Breast epithelium (tissue), 4 donors: ENCODE measurements at regions of chr2 and their contacts with region 1.

Region 1: DNA sequence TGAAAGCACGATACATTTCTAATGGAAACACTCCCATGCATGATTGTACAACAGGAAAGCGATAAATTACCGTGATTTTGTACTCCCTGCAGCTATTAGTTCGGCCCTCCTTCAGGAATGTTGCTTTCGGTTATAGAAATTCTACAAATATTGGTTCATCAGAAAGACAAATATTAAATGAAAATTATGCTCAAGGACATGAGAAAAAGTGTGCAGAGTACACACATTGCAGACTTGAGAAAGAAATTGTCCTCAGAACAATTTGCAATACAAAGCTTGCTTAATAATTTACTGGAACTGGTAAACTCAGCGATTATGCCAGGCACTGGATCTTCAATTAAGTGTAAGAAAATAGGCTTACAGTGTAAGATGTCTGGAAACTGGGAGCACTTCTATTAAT is 45.9 kb downstream of the ABCG8 start:
- DNase-seq: no peak
- H3K4me3 ChIP-seq: no peak overlapping the region
- H3K27ac ChIP-seq: no peak overlapping the region
- H3K4me1 ChIP-seq: no peaks in the 10 kb centered on the region
- H3K27me3 ChIP-seq: no peaks in the 10 kb centered on the region
- CTCF ChIP-seq: no peak
- POLR2A ChIP-seq: no peak

Region 2: DNA sequence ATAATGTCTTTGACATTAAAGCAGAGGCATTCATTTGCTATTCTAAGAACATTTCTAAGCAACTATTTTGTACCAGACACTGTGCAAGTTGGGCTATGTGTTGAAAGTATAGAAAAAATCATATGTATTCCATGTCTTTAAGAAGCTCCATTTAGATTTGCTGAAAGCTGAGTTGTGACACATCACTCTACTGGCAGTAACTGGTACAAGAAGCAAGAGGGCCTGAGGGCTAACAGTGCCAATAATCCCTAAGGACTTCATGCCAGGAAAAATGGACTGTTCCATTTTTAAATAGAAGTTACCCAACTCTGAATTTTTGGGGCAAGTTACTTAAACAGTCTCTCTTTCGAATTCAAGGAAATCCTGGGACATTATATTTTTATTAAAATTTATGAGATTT is 1547.8 kb after region 1 on chr2:
- intact Hi-C with region 1: loop called (anchors 5 kb)
- DNase-seq: no peak
- H3K4me3 ChIP-seq: no peak overlapping the region
- H3K27ac ChIP-seq: no peak overlapping the region
- H3K4me1 ChIP-seq: no peaks in the 10 kb centered on the region
- H3K27me3 ChIP-seq: no peaks in the 10 kb centered on the region
- CTCF ChIP-seq: no peak
- POLR2A ChIP-seq: no peak